Activated naive CD8-positive, alpha-beta T cell treated with anti-CD3 and anti-CD28 coated beads, Interleukin-2, amount 10 ng/mL, durations not matched to agents 7 days and 5 days (primary cell): ENCODE measurements at regions of chr19 and their contacts with region 1.

Region 1: GRCh38 chr19:58519355-58520256 is at the start of gene ZBTB45:
- DNase-seq: peak; percentile 96
- ATAC-seq: peak; percentile 85
- H3K4me3 Mint-ChIP-seq: peak within 1 kb of the TSS; percentile 99
- H3K27ac Mint-ChIP-seq: peak within 1 kb of the TSS; percentile 92
- H3K4me1 Mint-ChIP-seq: peaks cover 36% of the 10 kb centered on the region
- H3K27me3 Mint-ChIP-seq: no peaks in the 10 kb centered on the region
- total RNA-seq, gene ZBTB45: 18.9 to 19.5 TPM

Region 2: GRCh38 chr19:58475714-58476497 is 43.7 kb before region 1 on chr19 and contains the start of gene ZNF446:
- POLR2A ChIA-PET with region 1: interaction called, 10 read pairs
- DNase-seq: peak; percentile 98
- ATAC-seq: peak; percentile 89
- H3K4me3 Mint-ChIP-seq: peak within 1 kb of the TSS; percentile 97
- H3K27ac Mint-ChIP-seq: peak within 1 kb of the TSS; percentile 100
- H3K4me1 Mint-ChIP-seq: peaks cover 18% of the 10 kb centered on the region
- H3K27me3 Mint-ChIP-seq: no peaks in the 10 kb centered on the region
- total RNA-seq, gene ZNF446: 10.9 TPM

Region 3: GRCh38 chr19:58543826-58544590 is 24.4 kb after region 1 on chr19 and contains the start of gene TRIM28:
- POLR2A ChIA-PET with region 1: interaction called, 55 read pairs
- DNase-seq: peak; percentile 100
- ATAC-seq: peak; percentile 96
- H3K4me3 Mint-ChIP-seq: peak within 1 kb of the TSS; percentile 98
- H3K27ac Mint-ChIP-seq: peak within 1 kb of the TSS; percentile 98
- H3K4me1 Mint-ChIP-seq: peaks cover 28% of the 10 kb centered on the region
- H3K27me3 Mint-ChIP-seq: peaks cover 20% of the 10 kb centered on the region
- total RNA-seq, gene TRIM28: 409 to 412 TPM

Region 4: GRCh38 chr19:58558623-58559274 is 39.1 kb after region 1 on chr19:
- POLR2A ChIA-PET with region 1: interaction called, 63 read pairs
- DNase-seq: peak; percentile 100
- ATAC-seq: peak; percentile 65
- H3K4me3 Mint-ChIP-seq: peak overlapping the region; percentile 96
- H3K27ac Mint-ChIP-seq: peak overlapping the region; percentile 96
- H3K4me1 Mint-ChIP-seq: peaks cover 41% of the 10 kb centered on the region
- H3K27me3 Mint-ChIP-seq: no peaks in the 10 kb centered on the region

Region 5: DNA sequence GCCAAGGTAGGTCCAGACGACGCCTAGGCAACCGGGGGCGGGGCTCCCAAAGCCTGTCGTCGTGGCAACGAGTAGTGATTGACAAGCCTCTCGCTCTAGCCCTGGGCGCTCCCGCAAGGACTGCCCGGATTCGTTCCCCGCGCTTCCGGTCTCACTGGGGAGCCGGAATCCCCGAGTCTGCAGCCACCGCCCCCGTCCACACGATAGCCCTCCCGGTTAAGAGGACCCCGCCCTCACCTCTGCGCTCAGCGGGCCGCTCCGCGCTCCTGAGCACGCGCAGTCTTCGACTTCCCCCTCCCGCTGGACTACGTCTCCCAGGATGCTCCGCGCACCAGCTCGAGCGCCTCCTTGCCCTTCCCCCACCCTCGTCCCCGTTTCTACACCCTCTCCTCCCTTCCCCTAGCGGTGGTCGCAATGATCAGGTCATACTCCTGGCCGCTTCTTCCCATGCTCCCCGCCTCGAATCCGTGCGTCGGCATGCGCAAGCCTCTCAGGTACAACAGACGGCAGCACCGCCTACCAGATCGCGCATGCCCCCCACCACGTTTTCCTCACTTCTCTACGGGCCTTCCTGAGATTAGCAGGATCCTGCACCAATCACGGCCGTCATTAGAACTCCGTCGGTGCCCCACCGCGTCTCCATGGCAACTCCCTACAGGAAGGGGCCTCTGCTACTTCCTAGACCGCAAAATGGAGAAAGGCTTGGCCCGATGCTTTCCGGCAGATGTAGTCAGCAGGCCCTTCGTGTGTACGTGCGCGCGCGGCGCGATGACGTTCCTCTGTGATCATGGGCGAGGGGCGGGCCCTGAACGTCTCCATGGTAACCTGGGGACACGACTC is 53.4 kb after region 1 on chr19 and contains the start of gene MZF1:
- POLR2A ChIA-PET with region 1: interaction called, 37 read pairs
- DNase-seq: peak; percentile 99
- ATAC-seq: peak; percentile 63
- H3K4me3 Mint-ChIP-seq: peak within 1 kb of the TSS; percentile 98
- H3K27ac Mint-ChIP-seq: peak within 1 kb of the TSS; percentile 100
- H3K4me1 Mint-ChIP-seq: peaks cover 34% of the 10 kb centered on the region
- H3K27me3 Mint-ChIP-seq: no peaks in the 10 kb centered on the region
- total RNA-seq, gene MZF1: 31.3 to 31.7 TPM

Region 6: DNA sequence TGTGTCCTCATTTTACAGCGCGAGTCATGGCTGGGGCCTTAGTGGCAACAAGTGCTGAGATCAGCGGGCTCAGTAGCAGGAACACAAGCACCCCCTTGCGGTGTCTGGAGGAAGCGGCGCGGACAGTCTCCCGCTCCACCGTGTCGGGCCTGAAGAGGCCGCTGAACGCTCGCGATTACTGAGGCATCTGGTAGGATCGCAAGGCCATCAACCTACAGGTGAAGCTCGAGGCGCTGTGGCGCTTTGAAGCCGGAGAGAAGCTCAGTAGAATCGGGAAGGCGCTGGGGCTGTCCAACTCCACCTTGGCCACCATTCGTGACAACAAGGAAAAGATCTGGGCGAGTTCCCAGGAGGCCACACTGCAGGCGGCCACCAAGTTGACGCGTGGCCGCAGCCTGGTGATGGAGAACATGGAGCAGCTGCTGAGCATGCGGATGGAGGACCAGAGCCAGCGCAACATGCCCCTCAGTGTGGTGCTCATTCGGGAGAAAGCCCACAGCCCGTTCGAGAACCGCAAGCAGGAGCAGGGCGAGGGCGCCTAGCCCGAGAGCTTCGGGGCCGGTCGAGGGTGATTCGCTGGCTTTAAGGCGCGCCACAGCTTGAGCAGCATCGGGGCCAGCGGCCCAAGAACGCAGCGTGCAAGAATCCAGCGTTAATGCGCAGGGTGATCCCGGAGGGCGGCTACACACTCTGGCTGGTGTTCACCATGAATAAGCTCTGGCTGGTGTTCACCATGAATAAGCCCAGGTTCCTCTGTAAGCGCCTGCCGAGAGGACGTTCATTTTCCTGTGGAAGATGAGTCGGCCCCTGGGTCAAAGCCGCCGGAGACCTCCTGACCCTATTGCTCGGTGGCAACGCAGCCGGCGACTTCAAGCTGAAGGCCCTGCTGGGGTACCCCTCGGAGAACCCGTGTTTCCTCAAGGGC is 61.9 kb after region 1 on chr19:
- POLR2A ChIA-PET with region 1: interaction called, 37 read pairs
- DNase-seq: peak; percentile 89
- ATAC-seq: peak; percentile 96
- H3K4me3 Mint-ChIP-seq: no peak overlapping the region
- H3K27ac Mint-ChIP-seq: peak overlapping the region; percentile 59
- H3K4me1 Mint-ChIP-seq: peaks cover 22% of the 10 kb centered on the region
- H3K27me3 Mint-ChIP-seq: no peaks in the 10 kb centered on the region